PC-3 (cell line): ENCODE measurements at regions of chr3 and their contacts with region 1.

Region 1: DNA sequence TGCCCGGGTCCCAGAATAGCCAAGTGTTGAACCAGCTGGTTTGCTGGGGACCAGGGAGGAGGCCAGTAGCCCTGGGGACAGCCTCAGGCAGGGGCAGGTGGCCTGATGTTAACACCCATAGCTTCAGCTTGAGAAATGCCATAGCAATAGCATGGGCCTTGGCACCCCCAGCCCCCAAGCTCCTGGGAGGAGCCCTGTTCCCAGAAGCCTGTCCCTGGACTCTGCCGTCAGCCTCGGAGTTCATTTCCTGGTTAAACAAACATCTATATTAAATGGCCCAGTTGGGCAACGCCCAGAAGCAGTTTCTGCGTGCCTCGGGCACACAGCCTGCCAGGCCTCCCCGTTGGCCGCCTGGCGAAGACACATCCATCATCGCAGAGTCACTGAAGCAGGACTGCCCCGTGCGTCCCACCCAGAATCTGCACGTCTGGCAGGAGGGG is 58.2 kb downstream of the FGD5 start:
- DNase-seq: peak; percentile 28
- ATAC-seq: peak; percentile 69
- H3K4me3 ChIP-seq: no peak overlapping the region
- H3K27ac ChIP-seq: no peak overlapping the region
- H3K4me1 ChIP-seq: no peaks in the 10 kb centered on the region
- H3K27me3 ChIP-seq: peaks cover 27% of the 10 kb centered on the region
- CTCF ChIP-seq: no peak

Region 2: GRCh38 chr3:14774431-14774830 is 102.5 kb before region 1 on chr3:
- CTCF ChIA-PET with region 1: no interaction called
- POLR2A ChIA-PET with region 1: no interaction called
- intact Hi-C with region 1: no loop called
- DNase-seq: no peak
- ATAC-seq: no peak
- H3K4me3 ChIP-seq: no peak overlapping the region
- H3K27ac ChIP-seq: no peak overlapping the region
- H3K4me1 ChIP-seq: no peaks in the 10 kb centered on the region
- H3K27me3 ChIP-seq: no peaks in the 10 kb centered on the region
- CTCF ChIP-seq: no peak

Region 3: DNA sequence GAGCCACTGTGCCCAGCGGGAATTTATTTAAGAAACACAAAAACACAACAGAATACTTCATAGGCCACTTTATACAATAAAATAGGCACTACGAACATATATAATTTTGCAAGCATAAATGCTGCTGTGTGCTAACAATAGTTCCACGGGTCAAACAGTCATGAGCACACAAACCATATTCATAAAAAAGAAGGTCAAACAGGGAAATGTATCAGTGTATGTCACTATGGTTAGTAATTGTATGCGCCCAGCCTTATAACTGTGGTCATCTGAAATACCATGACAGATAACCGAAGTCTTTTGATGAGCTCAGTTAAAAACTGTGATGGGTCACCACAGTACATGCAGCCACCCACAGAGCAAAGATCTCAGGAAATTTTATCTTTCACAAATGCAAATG is 32.3 kb after region 1 on chr3:
- CTCF ChIA-PET with region 1: no interaction called
- POLR2A ChIA-PET with region 1: no interaction called
- intact Hi-C with region 1: loop called (anchors 1 kb)
- DNase-seq: no peak
- ATAC-seq: no peak
- H3K4me3 ChIP-seq: no peak overlapping the region
- H3K27ac ChIP-seq: no peak overlapping the region
- H3K4me1 ChIP-seq: no peaks in the 10 kb centered on the region
- H3K27me3 ChIP-seq: peaks cover 74% of the 10 kb centered on the region
- CTCF ChIP-seq: no peak

Region 4: DNA sequence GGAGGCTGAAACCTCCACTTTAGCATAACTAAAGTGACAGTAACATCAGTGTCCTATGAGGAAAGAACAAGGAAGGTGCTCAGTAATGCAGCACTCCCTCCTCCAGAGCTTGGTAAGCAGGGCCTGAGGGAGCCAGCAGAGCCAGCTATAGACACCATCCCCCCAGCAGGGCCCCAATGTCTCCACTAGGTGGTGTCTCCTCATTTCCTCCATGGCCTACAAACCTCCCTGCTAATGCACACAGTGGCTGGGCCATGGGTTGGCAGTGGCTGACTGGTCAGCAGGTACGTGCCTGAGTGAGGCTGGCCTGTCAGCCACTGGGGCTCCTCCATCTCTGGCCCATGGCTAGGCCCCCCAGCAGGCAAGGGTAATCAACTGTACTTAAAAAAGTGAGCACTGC is 174.6 kb after region 1 on chr3:
- CTCF ChIA-PET with region 1: no interaction called
- POLR2A ChIA-PET with region 1: no interaction called
- intact Hi-C with region 1: no loop called
- DNase-seq: peak; percentile 62
- ATAC-seq: peak; percentile 92
- H3K4me3 ChIP-seq: no peak overlapping the region
- H3K27ac ChIP-seq: no peak overlapping the region
- H3K4me1 ChIP-seq: no peaks in the 10 kb centered on the region
- H3K27me3 ChIP-seq: no peaks in the 10 kb centered on the region
- CTCF ChIP-seq: peak; percentile 77